CD4-positive, alpha-beta memory T cell (primary cell): ENCODE measurements at regions of chr6 and their contacts with region 1.

Region 1: GRCh38 chr6:109440331-109441068 is at the starts of genes PPIL6 and SMPD2:
- DNase-seq: peak; percentile 77 to 84 (median 80)
- H3K4me3 ChIP-seq: peak within 1 kb of the TSS; percentile 69 to 82
- H3K4me3 Mint-ChIP-seq: peak within 1 kb of the TSS; percentile 91 to 98 (median 94)
- H3K27ac ChIP-seq: peak within 1 kb of the TSS; percentile 89
- H3K27ac Mint-ChIP-seq: peak within 1 kb of the TSS; percentile 96 to 98 (median 97)
- H3K4me1 ChIP-seq: peaks cover 25% of the 10 kb centered on the region
- H3K4me1 Mint-ChIP-seq: peaks cover 15 to 32% (median 21%) of the 10 kb centered on the region in 4 donors
- H3K27me3 ChIP-seq: no peaks in the 10 kb centered on the region
- H3K27me3 Mint-ChIP-seq: no peaks in the 10 kb centered on the region
- total RNA-seq, gene PPIL6: 0.39 to 0.52 TPM
- total RNA-seq, gene SMPD2: 21.7 to 23.6 TPM

Region 2: DNA sequence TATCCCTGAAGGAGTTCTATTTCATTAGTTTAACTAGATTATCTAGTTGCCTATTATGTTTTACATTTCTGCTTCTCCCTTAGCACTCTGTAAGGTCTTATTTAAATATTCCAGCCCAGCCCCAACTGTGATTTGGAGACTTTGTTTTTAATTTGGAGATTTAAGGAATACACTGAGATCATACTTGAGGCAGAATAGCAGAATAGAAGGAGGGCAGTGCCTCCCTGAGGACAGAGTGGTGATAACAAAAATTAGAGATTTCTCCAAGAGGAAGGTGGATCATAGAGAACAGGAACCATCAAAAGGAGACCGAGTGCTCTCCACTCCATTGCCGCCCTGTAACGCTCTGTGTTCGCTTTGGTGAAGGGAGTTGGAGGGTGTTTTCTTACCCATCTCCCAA is 43.5 kb before region 1 on chr6:
- CTCF ChIA-PET with region 1: no interaction called
- POLR2A ChIA-PET with region 1: no interaction called
- intact Hi-C with region 1: no loop called
- DNase-seq: no peak
- H3K4me3 ChIP-seq: no peak overlapping the region
- H3K4me3 Mint-ChIP-seq: no peak overlapping the region
- H3K27ac ChIP-seq: no peak overlapping the region
- H3K27ac Mint-ChIP-seq: no peak overlapping the region
- H3K4me1 ChIP-seq: no peaks in the 10 kb centered on the region
- H3K4me1 Mint-ChIP-seq: peaks cover 0 to 2% (median 0%) of the 10 kb centered on the region in 4 donors
- H3K27me3 ChIP-seq: no peaks in the 10 kb centered on the region
- H3K27me3 Mint-ChIP-seq: peaks cover 0 to 2% of the 10 kb centered on the region in 2 donors

Region 3: DNA sequence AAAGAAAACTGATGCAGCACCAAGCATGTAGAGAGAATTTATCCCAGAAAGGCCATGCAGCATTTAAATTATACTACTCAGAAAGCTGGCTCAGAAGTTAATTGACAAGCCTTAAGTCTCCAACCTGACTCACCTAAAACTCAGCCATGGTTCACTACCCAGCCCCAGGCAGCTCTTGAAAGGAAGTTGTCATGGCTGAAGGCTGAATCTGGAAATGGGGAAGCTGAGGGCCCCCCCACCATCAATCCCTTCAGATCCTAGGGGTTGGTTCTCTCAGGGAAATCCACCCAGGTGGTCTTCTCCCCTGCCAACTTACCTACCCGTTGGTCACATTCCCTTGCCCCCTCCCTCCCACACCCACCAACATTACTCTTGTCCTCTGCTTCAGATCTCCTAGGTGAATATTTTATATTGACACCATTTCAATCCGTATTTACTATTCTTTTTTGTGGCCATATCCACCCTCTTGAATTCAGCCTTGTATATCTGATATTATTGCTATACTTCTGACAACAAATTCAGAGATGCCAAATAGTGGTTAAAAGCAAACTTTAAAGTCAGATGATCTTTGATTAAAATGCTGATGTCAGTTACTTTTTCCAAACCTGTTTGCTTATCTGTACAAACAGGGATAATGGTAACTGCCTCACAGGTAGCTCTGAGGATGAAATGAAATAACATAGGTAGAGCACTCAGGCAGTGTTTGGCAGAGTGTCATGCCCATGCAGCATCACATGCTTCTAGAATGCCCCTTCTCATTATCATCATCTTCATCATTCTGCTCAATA is 19.5 kb before region 1 on chr6:
- CTCF ChIA-PET with region 1: no interaction called
- POLR2A ChIA-PET with region 1: no interaction called
- intact Hi-C with region 1: no loop called
- DNase-seq: no peak
- H3K4me3 ChIP-seq: no peak overlapping the region
- H3K4me3 Mint-ChIP-seq: no peak overlapping the region
- H3K27ac ChIP-seq: no peak overlapping the region
- H3K27ac Mint-ChIP-seq: peak overlapping the region in 1 of 7 donors; percentile 2
- H3K4me1 ChIP-seq: no peaks in the 10 kb centered on the region
- H3K4me1 Mint-ChIP-seq: peaks cover 0 to 2% (median 0%) of the 10 kb centered on the region in 4 donors
- H3K27me3 ChIP-seq: no peaks in the 10 kb centered on the region
- H3K27me3 Mint-ChIP-seq: peaks cover 0 to 1% of the 10 kb centered on the region in 2 donors

Region 4: DNA sequence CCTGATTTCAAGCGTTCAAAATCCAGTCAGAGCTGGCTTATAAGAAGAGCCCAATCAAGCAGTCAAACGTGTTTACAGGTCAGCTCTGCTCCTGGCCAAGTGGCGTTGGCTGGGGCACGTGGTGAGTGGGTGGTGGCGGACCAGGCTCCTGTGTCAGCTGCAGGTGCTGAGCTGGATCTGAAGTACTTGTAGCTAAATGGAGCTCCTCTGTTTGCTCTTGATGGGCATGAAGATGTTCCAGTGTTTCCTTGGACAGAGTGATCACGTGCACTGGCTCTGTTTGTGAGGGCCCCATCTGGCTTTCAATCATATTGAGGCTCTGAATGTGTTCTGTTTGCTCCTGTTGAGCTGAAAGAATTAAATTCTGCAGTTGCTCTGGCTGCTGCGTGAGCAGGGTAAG is 25.3 kb after region 1 on chr6:
- CTCF ChIA-PET with region 1: interaction called, 12 read pairs
- POLR2A ChIA-PET with region 1: interaction called, 5 read pairs
- intact Hi-C with region 1: no loop called
- DNase-seq: no peak
- H3K4me3 ChIP-seq: no peak overlapping the region
- H3K4me3 Mint-ChIP-seq: no peak overlapping the region
- H3K27ac ChIP-seq: no peak overlapping the region
- H3K27ac Mint-ChIP-seq: peak overlapping the region in 4 of 7 donors; percentile 9 to 77 (median 58)
- H3K4me1 ChIP-seq: peaks cover 19% of the 10 kb centered on the region
- H3K4me1 Mint-ChIP-seq: peaks cover 35 to 60% (median 41%) of the 10 kb centered on the region in 4 donors
- H3K27me3 ChIP-seq: no peaks in the 10 kb centered on the region
- H3K27me3 Mint-ChIP-seq: no peaks in the 10 kb centered on the region

Region 5: GRCh38 chr6:109491207-109491938 is 50.9 kb after region 1 on chr6:
- CTCF ChIA-PET with region 1: interaction called, 5 read pairs
- POLR2A ChIA-PET with region 1: interaction called, 22 read pairs
- intact Hi-C with region 1: no loop called
- DNase-seq: peak in 4 of 5 donors; percentile 39 to 60 (median 45)
- H3K4me3 ChIP-seq: peak overlapping the region in 1 of 2 donors; percentile 26
- H3K4me3 Mint-ChIP-seq: peak overlapping the region; percentile 22 to 76 (median 58)
- H3K27ac ChIP-seq: peak overlapping the region; percentile 30
- H3K27ac Mint-ChIP-seq: peak overlapping the region; percentile 66 to 90 (median 86)
- H3K4me1 ChIP-seq: peaks cover 20% of the 10 kb centered on the region
- H3K4me1 Mint-ChIP-seq: peaks cover 17 to 22% (median 20%) of the 10 kb centered on the region in 4 donors
- H3K27me3 ChIP-seq: no peaks in the 10 kb centered on the region
- H3K27me3 Mint-ChIP-seq: no peaks in the 10 kb centered on the region